ENCODE measurements at regions of chr17 and their contacts with region 1.

Region 1: GRCh38 chr17:83041305-83041704 is 38.1 kb upstream of the METRNL start:
- DNase-seq: no peak
- H3K4me3 ChIP-seq: no peak overlapping the region
- H3K4me3 Mint-ChIP-seq: no peak overlapping the region
- H3K27ac ChIP-seq: no peak overlapping the region
- H3K27ac Mint-ChIP-seq: peak overlapping the region in 1 of 7 donors; percentile 64
- H3K4me1 ChIP-seq: no peaks in the 10 kb centered on the region
- H3K4me1 Mint-ChIP-seq: peaks cover 10 to 24% (median 15%) of the 10 kb centered on the region in 4 donors
- H3K27me3 ChIP-seq: no peaks in the 10 kb centered on the region
- H3K27me3 Mint-ChIP-seq: no peaks in the 10 kb centered on the region

Region 2: DNA sequence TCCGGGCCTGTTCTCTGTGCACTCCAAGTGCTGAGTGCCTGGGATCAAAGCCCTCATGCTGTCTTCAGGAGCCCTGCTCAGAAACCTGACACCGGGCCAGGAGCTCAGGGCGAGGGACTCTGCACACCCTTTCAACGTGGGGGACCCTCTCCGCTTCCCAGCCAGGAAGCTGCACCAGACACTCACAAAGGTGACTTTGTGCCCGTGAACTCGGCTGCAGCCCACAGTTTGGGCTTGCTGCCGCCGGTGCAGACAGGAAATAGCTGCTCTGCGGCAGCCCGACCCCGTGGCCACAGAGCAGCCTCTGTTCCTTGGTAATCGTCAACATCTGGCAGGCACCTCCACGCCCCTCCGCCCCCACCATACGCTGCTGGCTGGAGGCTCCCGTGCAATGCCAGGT is 55.3 kb before region 1 on chr17:
- CTCF ChIA-PET with region 1: no interaction called
- POLR2A ChIA-PET with region 1: no interaction called
- intact Hi-C with region 1: loop called (anchors 10 kb)
- DNase-seq: peak; percentile 55 to 78 (median 66)
- H3K4me3 ChIP-seq: peak overlapping the region in 1 of 2 donors; percentile 33
- H3K4me3 Mint-ChIP-seq: peak overlapping the region; percentile 50 to 89 (median 82)
- H3K27ac ChIP-seq: no peak overlapping the region
- H3K27ac Mint-ChIP-seq: peak overlapping the region; percentile 30 to 90 (median 74)
- H3K4me1 ChIP-seq: peaks cover 23% of the 10 kb centered on the region
- H3K4me1 Mint-ChIP-seq: peaks cover 22 to 35% (median 27%) of the 10 kb centered on the region in 4 donors
- H3K27me3 ChIP-seq: no peaks in the 10 kb centered on the region
- H3K27me3 Mint-ChIP-seq: no peaks in the 10 kb centered on the region